Heart right ventricle (tissue), 16 donors: ENCODE measurements at regions of chr1 and their contacts with region 1.

Region 1: DNA sequence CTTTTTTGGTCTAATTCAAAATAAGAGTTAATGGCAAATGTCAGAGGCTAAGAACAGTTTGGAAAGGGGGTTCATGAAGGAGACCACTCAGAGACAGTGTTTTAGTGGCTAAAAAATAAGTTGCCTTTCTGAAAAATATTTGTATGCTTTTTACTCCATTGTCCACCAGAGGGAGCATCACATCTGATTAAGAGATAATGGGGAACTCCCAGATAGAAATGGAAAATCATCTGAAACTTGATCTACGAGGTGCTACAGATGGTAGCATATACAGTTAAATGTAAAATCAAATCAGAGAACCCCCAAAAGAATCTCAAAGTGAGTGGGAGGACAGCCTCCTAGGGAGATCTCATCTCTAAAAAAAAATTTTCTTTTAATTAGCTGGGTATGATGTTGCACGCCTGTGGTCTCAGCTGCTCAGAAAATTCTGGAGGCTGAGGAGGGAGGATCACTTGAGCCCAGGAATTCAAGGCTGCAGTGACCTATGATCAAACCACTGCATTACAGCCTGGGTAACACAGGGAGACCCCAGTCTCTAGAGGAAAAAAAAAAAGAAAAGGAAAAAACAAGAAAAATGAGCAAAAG is 9.7 kb downstream of the SMYD3 start:
- DNase-seq: no peak
- ATAC-seq: peak in 4 of 8 donors; percentile 10 to 50 (median 28)
- H3K4me3 ChIP-seq: no peak overlapping the region
- H3K27ac ChIP-seq: no peak overlapping the region
- H3K4me1 ChIP-seq: peaks cover 0 to 10% (median 5%) of the 10 kb centered on the region in 9 donors
- H3K27me3 ChIP-seq: no peaks in the 10 kb centered on the region
- CTCF ChIP-seq: peak; percentile 65 to 82 (median 73)

Region 2: DNA sequence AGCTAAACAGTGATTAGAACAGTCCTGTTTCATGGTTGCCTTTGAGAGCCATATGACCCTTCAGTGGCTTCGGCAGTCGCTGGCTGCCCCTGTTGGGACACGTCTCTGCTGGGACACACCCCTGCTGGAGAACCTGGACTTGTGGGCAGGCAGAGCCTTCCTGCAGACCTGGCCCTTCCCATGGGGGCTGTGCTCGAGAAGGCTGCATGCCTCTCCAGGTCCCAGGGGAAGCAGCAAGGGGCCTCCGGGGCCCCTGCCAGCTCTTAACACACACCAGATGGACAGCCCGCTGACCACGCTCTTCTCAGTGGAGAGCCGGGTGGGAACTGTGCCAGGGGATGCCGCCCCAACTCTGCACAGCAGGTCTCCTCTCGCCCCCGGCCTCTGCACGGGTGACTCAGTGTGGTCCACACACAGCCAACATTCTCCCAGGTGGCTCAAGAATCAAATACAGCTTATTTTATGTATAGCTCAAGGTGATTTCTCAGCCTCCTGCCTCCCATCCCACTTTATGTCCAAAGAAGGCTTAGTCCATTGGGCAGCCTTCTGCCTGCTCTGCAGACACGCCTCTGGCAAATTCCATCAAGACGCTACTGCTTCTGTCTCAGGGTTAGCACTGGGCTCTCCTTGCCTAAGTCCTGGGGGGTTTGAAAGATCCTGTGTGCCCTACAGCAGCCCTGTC is 891.8 kb before region 1 on chr1:
- intact Hi-C with region 1: loop called in 1 of 10 experiments (anchors 5 kb)
- DNase-seq: peak in 1 of 2 donors; percentile 22
- ATAC-seq: peak in 6 of 8 donors; percentile 24 to 63 (median 42)
- H3K4me3 ChIP-seq: no peak overlapping the region
- H3K27ac ChIP-seq: no peak overlapping the region
- H3K4me1 ChIP-seq: peaks cover 0 to 16% (median 10%) of the 10 kb centered on the region in 9 donors
- H3K27me3 ChIP-seq: peaks cover 0 to 31% (median 4%) of the 10 kb centered on the region in 7 donors
- CTCF ChIP-seq: no peak

Region 3: GRCh38 chr1:246012341-246012740 is 485.1 kb before region 1 on chr1:
- intact Hi-C with region 1: loop called in 9 of 10 experiments (anchors 2 to 10 kb)
- DNase-seq: no peak
- ATAC-seq: no peak
- H3K4me3 ChIP-seq: no peak overlapping the region
- H3K27ac ChIP-seq: no peak overlapping the region
- H3K4me1 ChIP-seq: no peaks in the 10 kb centered on the region
- H3K27me3 ChIP-seq: no peaks in the 10 kb centered on the region
- CTCF ChIP-seq: peak; percentile 26 to 74 (median 63)

Region 4: GRCh38 chr1:246364415-246364941 is 132.9 kb before region 1 on chr1:
- intact Hi-C with region 1: no loop called
- DNase-seq: no peak
- ATAC-seq: no peak
- H3K4me3 ChIP-seq: no peak overlapping the region
- H3K27ac ChIP-seq: no peak overlapping the region
- H3K4me1 ChIP-seq: no peaks in the 10 kb centered on the region
- H3K27me3 ChIP-seq: no peaks in the 10 kb centered on the region
- CTCF ChIP-seq: no peak

Region 5: GRCh38 chr1:246428542-246429308 is 68.7 kb before region 1 on chr1:
- intact Hi-C with region 1: no loop called
- DNase-seq: no peak
- ATAC-seq: no peak
- H3K4me3 ChIP-seq: no peak overlapping the region
- H3K27ac ChIP-seq: no peak overlapping the region
- H3K4me1 ChIP-seq: peaks cover 0 to 3% (median 0%) of the 10 kb centered on the region in 9 donors
- H3K27me3 ChIP-seq: no peaks in the 10 kb centered on the region
- CTCF ChIP-seq: no peak

Region 6: GRCh38 chr1:246699095-246699735 is 201.8 kb after region 1 on chr1:
- intact Hi-C with region 1: loop called (anchors 1 to 5 kb)
- DNase-seq: peak; percentile 81 to 92
- ATAC-seq: peak; percentile 88 to 97 (median 92)
- H3K4me3 ChIP-seq: peak overlapping the region in 8 of 10 donors; percentile 4 to 45 (median 34)
- H3K27ac ChIP-seq: peak overlapping the region in 9 of 10 donors; percentile 18 to 87 (median 49)
- H3K4me1 ChIP-seq: peaks cover 3 to 26% (median 10%) of the 10 kb centered on the region in 9 donors
- H3K27me3 ChIP-seq: no peaks in the 10 kb centered on the region
- CTCF ChIP-seq: peak; percentile 74 to 96 (median 91)

Region 7: GRCh38 chr1:246753670-246754535 is 256.5 kb after region 1 on chr1:
- intact Hi-C with region 1: loop called in 7 of 10 experiments (anchors 2 to 10 kb)
- DNase-seq: peak; percentile 42 to 53
- ATAC-seq: peak; percentile 43 to 86 (median 76)
- H3K4me3 ChIP-seq: no peak overlapping the region
- H3K27ac ChIP-seq: no peak overlapping the region
- H3K4me1 ChIP-seq: no peaks in the 10 kb centered on the region
- H3K27me3 ChIP-seq: no peaks in the 10 kb centered on the region
- CTCF ChIP-seq: peak; percentile 51 to 81 (median 76)